Panc1 (cell line): ENCODE measurements at regions of chr3 and their contacts with region 1.

Region 1: DNA sequence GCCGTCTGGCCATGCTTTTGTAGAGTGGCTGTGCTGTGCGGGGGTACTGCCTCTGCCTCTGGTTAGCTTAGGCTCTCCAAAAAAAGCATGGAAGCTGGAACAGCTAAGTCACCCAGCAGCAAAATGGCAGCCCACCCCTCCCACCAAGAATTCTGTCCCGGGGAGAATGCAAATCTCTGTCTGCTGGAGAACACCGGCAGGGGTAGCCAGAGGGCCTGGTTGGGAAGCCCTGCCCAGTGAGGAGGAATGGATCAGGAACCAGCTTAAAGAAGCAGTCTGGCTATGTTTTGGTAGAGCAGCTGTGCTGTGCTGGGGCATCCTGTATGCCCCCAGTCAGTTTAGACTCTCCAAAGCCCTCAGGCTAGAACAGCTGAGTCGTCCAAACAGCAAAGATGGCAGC is 56.2 kb upstream of the PTPRG start:
- DNase-seq: no peak
- ATAC-seq: no peak
- H3K4me3 ChIP-seq: no peak overlapping the region
- H3K27ac ChIP-seq: no peak overlapping the region
- H3K4me1 ChIP-seq: no peaks in the 10 kb centered on the region
- H3K27me3 ChIP-seq: no peaks in the 10 kb centered on the region
- CTCF ChIP-seq: no peak

Region 2: GRCh38 chr3:61541694-61542093 is 36.5 kb after region 1 on chr3:
- CTCF ChIA-PET with region 1: no interaction called
- POLR2A ChIA-PET with region 1: interaction called, 14 read pairs
- in situ Hi-C with region 1: no loop called
- intact Hi-C with region 1: no loop called
- DNase-seq: no peak
- ATAC-seq: no peak
- H3K4me3 ChIP-seq: no peak overlapping the region
- H3K27ac ChIP-seq: no peak overlapping the region
- H3K4me1 ChIP-seq: no peaks in the 10 kb centered on the region
- H3K27me3 ChIP-seq: no peaks in the 10 kb centered on the region
- CTCF ChIP-seq: no peak

Region 3: DNA sequence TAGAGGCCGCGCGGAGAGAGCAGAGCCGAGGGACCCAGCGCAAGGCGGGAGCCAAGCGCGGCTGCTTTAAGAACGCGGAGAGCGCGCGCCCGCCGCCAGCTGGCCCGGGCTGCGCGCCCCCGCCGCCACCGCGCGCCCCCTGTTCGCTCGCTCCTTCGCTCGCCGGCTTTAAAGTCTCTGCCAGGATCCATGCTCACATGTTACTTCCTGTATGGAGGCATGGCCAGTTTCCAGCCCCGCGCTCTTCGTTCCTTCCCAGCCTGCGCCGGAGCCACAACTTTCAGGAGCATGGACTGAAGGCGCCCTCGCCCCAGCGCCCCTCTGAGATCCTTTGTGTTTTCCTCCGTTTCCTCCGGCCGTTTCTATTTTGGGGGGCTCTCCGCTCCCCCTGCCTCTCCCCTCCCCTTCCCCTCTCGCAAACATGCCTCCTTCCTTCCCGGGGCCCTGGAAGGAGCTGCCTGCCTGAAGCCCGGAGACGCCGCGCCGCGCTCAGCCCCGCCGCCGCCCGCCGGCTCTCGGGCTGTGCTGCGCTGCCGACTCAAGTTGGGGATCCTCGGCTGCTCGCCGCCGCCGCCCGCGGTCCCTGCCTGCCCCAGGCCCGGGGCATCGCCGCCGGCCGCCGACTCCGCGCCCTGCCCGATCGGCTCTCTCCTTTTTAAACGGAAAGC is 56.3 kb after region 1 on chr3 and contains the start of gene PTPRG:
- CTCF ChIA-PET with region 1: no interaction called
- POLR2A ChIA-PET with region 1: interaction called, 13 read pairs
- in situ Hi-C with region 1: no loop called
- intact Hi-C with region 1: no loop called
- DNase-seq: no peak
- ATAC-seq: peak; percentile 88
- H3K4me3 ChIP-seq: peak within 1 kb of the TSS; percentile 47 to 61
- H3K27ac ChIP-seq: no peak within 1 kb of the TSS
- H3K4me1 ChIP-seq: no peaks in the 10 kb centered on the region
- H3K27me3 ChIP-seq: peaks cover 8% of the 10 kb centered on the region; the same call in 1 of the 2 replicates
- CTCF ChIP-seq: no peak
- total RNA-seq, gene PTPRG: 0.74 TPM